ENCODE measurements at regions of chr7 and their contacts with region 1.

Region 1: GRCh38 chr7:110940756-110941155 is 150.2 kb upstream of the LRRN3 start:
- DNase-seq: no peak
- ATAC-seq: no peak
- H3K4me3 ChIP-seq: no peak overlapping the region
- H3K27ac ChIP-seq: no peak overlapping the region
- H3K4me1 ChIP-seq: no peaks in the 10 kb centered on the region
- H3K27me3 ChIP-seq: no peaks in the 10 kb centered on the region
- CTCF ChIP-seq: no peak

Region 2: GRCh38 chr7:110929480-110930249 is 11.1 kb before region 1 on chr7:
- CTCF ChIA-PET with region 1: no interaction called
- POLR2A ChIA-PET with region 1: no interaction called
- in situ Hi-C with region 1: no loop called
- intact Hi-C with region 1: loop called (anchors 1 kb)
- DNase-seq: no peak
- ATAC-seq: no peak
- H3K4me3 ChIP-seq: no peak overlapping the region
- H3K27ac ChIP-seq: no peak overlapping the region
- H3K4me1 ChIP-seq: no peaks in the 10 kb centered on the region
- H3K27me3 ChIP-seq: no peaks in the 10 kb centered on the region
- CTCF ChIP-seq: no peak